Dorsolateral prefrontal cortex (tissue), 120 donors: ENCODE measurements at regions of chr11 and their contacts with region 1.

Region 1: GRCh38 chr11:66408488-66409214 is 12.2 kb upstream of the NPAS4 start:
- DNase-seq: peak; percentile 81 to 94 (median 90)
- H3K4me3 ChIP-seq: peak overlapping the region; percentile 38 to 75 (median 58)
- H3K27ac ChIP-seq: peak overlapping the region in 27 of 59 donors; percentile 14 to 90 (median 37)
- H3K27me3 ChIP-seq: peaks cover 0 to 6% (median 0%) of the 10 kb centered on the region in 45 donors
- CTCF ChIP-seq: peak; percentile 98 to 100 (median 100)

Region 2: GRCh38 chr11:66429983-66430602 is 21.4 kb after region 1 on chr11:
- intact Hi-C with region 1: loop called (anchors 1 to 2 kb)
- DNase-seq: peak; percentile 74 to 89 (median 80)
- H3K4me3 ChIP-seq: no peak overlapping the region
- H3K27ac ChIP-seq: no peak overlapping the region
- H3K27me3 ChIP-seq: peaks cover 0 to 7% (median 0%) of the 10 kb centered on the region in 45 donors
- CTCF ChIP-seq: peak; percentile 65 to 93 (median 85)